Activated CD4-positive, alpha-beta T cell treated with anti-CD3 and anti-CD28 coated beads for 36 hours (primary cell): ENCODE measurements at regions of chr11 and their contacts with region 1.

Region 1: GRCh38 chr11:518463-519250 is 11.6 kb upstream of the RNH1 start:
- DNase-seq: peak; percentile 94
- ATAC-seq: peak; percentile 95
- H3K4me3 Mint-ChIP-seq: peak overlapping the region; percentile 67
- H3K27ac Mint-ChIP-seq: peak overlapping the region; percentile 85
- H3K4me1 Mint-ChIP-seq: peaks cover 3% of the 10 kb centered on the region
- H3K27me3 Mint-ChIP-seq: no peaks in the 10 kb centered on the region

Region 2: GRCh38 chr11:304915-305843 is 213.5 kb before region 1 on chr11:
- CTCF ChIA-PET with region 1: interaction called, 3 read pairs
- POLR2A ChIA-PET with region 1: no interaction called
- intact Hi-C with region 1: loop called in 1 of 2 experiments (anchors 1 kb)
- DNase-seq: peak; percentile 79
- ATAC-seq: no peak
- H3K4me3 Mint-ChIP-seq: no peak overlapping the region
- H3K27ac Mint-ChIP-seq: peak overlapping the region; percentile 1
- H3K4me1 Mint-ChIP-seq: peaks cover 20% of the 10 kb centered on the region
- H3K27me3 Mint-ChIP-seq: no peaks in the 10 kb centered on the region

Region 3: GRCh38 chr11:406978-407739 is 111.5 kb before region 1 on chr11:
- CTCF ChIA-PET with region 1: interaction called, 4 read pairs
- POLR2A ChIA-PET with region 1: no interaction called
- intact Hi-C with region 1: loop called in 1 of 2 experiments (anchors 1 kb)
- DNase-seq: peak; percentile 93
- ATAC-seq: peak; percentile 90
- H3K4me3 Mint-ChIP-seq: no peak overlapping the region
- H3K27ac Mint-ChIP-seq: no peak overlapping the region
- H3K4me1 Mint-ChIP-seq: peaks cover 5% of the 10 kb centered on the region
- H3K27me3 Mint-ChIP-seq: no peaks in the 10 kb centered on the region

Region 4: GRCh38 chr11:487571-488051 is 31.0 kb before region 1 on chr11:
- CTCF ChIA-PET with region 1: no interaction called
- POLR2A ChIA-PET with region 1: no interaction called
- intact Hi-C with region 1: no loop called
- DNase-seq: no peak
- ATAC-seq: no peak
- H3K4me3 Mint-ChIP-seq: no peak overlapping the region
- H3K27ac Mint-ChIP-seq: no peak overlapping the region
- H3K4me1 Mint-ChIP-seq: no peaks in the 10 kb centered on the region
- H3K27me3 Mint-ChIP-seq: no peaks in the 10 kb centered on the region

Region 5: GRCh38 chr11:568306-569157 is 49.9 kb after region 1 on chr11:
- CTCF ChIA-PET with region 1: interaction called, 4 read pairs
- POLR2A ChIA-PET with region 1: no interaction called
- intact Hi-C with region 1: loop called in 1 of 2 experiments (anchors 2 kb)
- DNase-seq: peak; percentile 97
- ATAC-seq: peak; percentile 93
- H3K4me3 Mint-ChIP-seq: peak overlapping the region; percentile 88
- H3K27ac Mint-ChIP-seq: peak overlapping the region; percentile 72
- H3K4me1 Mint-ChIP-seq: no peaks in the 10 kb centered on the region
- H3K27me3 Mint-ChIP-seq: no peaks in the 10 kb centered on the region